H1 (cell line): ENCODE measurements at regions of chr1 and their contacts with region 1.

Region 1: DNA sequence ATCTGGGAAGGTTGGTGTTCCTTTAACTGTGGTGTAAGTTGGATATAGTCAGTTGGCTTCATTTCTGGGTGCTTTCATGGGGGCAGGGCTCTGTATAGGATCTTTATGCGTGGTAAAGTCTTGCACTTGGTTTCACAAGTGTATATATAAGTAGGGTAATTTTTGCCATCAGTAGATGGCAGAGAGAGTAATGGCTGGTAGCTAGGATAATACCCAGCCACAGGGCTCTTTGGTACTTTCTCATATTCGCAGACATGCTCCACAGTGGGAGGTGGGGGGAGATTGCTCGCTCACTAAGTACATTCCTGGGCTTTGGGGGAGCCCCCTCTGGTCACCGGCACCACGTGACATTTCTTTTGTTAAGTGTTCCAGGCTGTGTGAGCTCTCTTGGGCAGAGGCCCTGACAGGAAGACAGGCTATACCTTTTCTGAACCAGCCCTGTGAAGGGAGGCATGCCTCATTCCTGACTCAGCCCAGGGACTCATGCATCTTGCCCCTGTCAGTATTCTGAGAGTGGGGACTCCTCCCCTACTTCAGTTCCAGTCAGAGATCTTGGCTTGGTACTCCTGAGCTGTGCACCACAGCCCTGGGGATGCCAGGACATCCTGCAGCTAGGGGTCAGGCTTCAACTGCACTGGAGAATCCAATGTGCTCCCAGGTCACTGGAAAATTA is 37.6 kb downstream of the FCRL2 start:
- DNase-seq: no peak
- H3K4me3 ChIP-seq: no peak overlapping the region
- H3K27ac ChIP-seq: no peak overlapping the region
- H3K4me1 ChIP-seq: no peaks in the 10 kb centered on the region
- H3K27me3 ChIP-seq: no peaks in the 10 kb centered on the region
- CTCF ChIP-seq: peak; percentile 10 to 39 (median 17); a peak in 2 of 4 replicates
- EP300 ChIP-seq: no peak
- POLR2A ChIP-seq: no peak
- RAD21 ChIP-seq: peak; percentile 19 to 41; a peak in 2 of 4 replicates

Region 2: DNA sequence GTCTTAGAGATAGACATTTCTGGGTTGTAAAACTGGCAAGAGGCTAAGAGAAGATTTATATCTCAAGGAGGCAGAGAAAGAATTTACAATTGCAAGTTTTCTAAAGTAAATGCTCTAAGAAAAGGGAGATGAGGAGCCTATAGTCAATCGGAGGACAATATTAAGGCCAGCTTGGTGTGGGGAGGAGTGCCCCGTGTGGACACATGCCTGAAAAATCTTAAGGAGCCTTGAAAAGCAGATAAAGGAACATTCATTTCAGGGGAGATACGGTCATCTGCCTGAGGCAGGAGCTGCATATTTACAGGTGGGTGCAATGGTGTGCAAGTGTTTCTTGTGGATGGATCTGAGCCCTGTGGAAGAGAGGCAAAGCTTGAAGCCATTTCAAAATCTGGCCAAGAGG is 11.9 kb after region 1 on chr1:
- CTCF ChIA-PET with region 1: interaction called, 29 read pairs
- POLR2A ChIA-PET with region 1: no interaction called
- DNase-seq: no peak
- H3K4me3 ChIP-seq: no peak overlapping the region
- H3K27ac ChIP-seq: no peak overlapping the region
- H3K4me1 ChIP-seq: peaks cover 0 to 5% (median 4%) of the 10 kb centered on the region in 4 experiments; a peak in 3 of 7 replicates
- H3K27me3 ChIP-seq: no peaks in the 10 kb centered on the region
- CTCF ChIP-seq: peak in 1 of 3 experiments; percentile 30; a peak in 1 of 4 replicates
- EP300 ChIP-seq: no peak
- POLR2A ChIP-seq: no peak
- RAD21 ChIP-seq: peak; percentile 26 to 31